ENCODE measurements at regions of chr3 and their contacts with region 1.

Region 1: GRCh38 chr3:104556372-104557078 is 810.2 kb upstream of the ALCAM start:
- DNase-seq: no peak
- ATAC-seq: no peak
- H3K4me3 ChIP-seq: no peak overlapping the region
- H3K27ac ChIP-seq: no peak overlapping the region
- H3K4me1 ChIP-seq: no peaks in the 10 kb centered on the region
- H3K27me3 ChIP-seq: no peaks in the 10 kb centered on the region
- CTCF ChIP-seq: no peak

Region 2: GRCh38 chr3:104437131-104437750 is 119.3 kb before region 1 on chr3:
- intact Hi-C with region 1: no loop called
- DNase-seq: no peak
- ATAC-seq: peak in 7 of 8 donors; percentile 47 to 90 (median 71)
- H3K4me3 ChIP-seq: no peak overlapping the region
- H3K27ac ChIP-seq: peak overlapping the region in 2 of 10 donors; percentile 12 to 27
- H3K4me1 ChIP-seq: peaks cover 0 to 5% (median 0%) of the 10 kb centered on the region in 9 donors
- H3K27me3 ChIP-seq: no peaks in the 10 kb centered on the region
- CTCF ChIP-seq: no peak

Region 3: GRCh38 chr3:104526901-104527401 is 29.6 kb before region 1 on chr3:
- intact Hi-C with region 1: loop called in 1 of 10 experiments (anchors 1 kb)
- DNase-seq: no peak
- ATAC-seq: no peak
- H3K4me3 ChIP-seq: no peak overlapping the region
- H3K27ac ChIP-seq: no peak overlapping the region
- H3K4me1 ChIP-seq: no peaks in the 10 kb centered on the region
- H3K27me3 ChIP-seq: no peaks in the 10 kb centered on the region
- CTCF ChIP-seq: no peak

Region 4: GRCh38 chr3:104596551-104596950 is 40.0 kb after region 1 on chr3:
- intact Hi-C with region 1: no loop called
- DNase-seq: no peak
- ATAC-seq: no peak
- H3K4me3 ChIP-seq: no peak overlapping the region
- H3K27ac ChIP-seq: no peak overlapping the region
- H3K4me1 ChIP-seq: no peaks in the 10 kb centered on the region
- H3K27me3 ChIP-seq: no peaks in the 10 kb centered on the region
- CTCF ChIP-seq: peak in 5 of 9 donors; percentile 19 to 35 (median 34)

Region 5: GRCh38 chr3:104974316-104974715 is 417.8 kb after region 1 on chr3:
- intact Hi-C with region 1: no loop called
- DNase-seq: no peak
- ATAC-seq: no peak
- H3K4me3 ChIP-seq: no peak overlapping the region
- H3K27ac ChIP-seq: no peak overlapping the region
- H3K4me1 ChIP-seq: no peaks in the 10 kb centered on the region
- H3K27me3 ChIP-seq: no peaks in the 10 kb centered on the region
- CTCF ChIP-seq: no peak

Measured in heart right ventricle (tissue), 16 donors.